ENCODE measurements at regions of chr3 and their contacts with region 1.

Region 1: GRCh38 chr3:149352556-149352955 is 19.1 kb upstream of the TM4SF18 start:
- DNase-seq: peak; percentile 59 to 72 (median 72)
- H3K4me3 ChIP-seq: peak overlapping the region in 1 of 7 experiments; percentile 7
- H3K27ac ChIP-seq: no peak overlapping the region
- H3K4me1 ChIP-seq: peaks cover 0 to 12% (median 1%) of the 10 kb centered on the region in 4 experiments
- H3K27me3 ChIP-seq: no peaks in the 10 kb centered on the region

Region 2: DNA sequence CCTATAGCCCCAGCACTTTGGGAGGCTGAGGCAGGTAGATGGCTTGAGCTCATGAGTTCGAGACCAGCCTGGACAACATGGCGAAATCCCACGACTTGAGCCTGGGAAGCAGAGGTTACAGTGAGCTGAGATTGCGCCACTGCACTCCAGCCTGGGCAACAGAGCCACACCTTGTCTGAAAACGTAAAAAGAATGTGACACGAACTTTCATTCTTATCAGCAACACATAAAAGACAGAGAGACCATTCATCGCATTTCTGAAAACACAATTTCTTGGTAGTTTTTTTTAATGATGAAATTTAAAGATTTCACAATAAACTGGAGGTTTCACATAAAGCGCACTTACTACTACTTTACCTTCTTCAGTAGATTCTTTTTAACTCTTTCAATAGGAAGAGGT is 284.7 kb before region 1 on chr3:
- CTCF ChIA-PET with region 1: no interaction called
- POLR2A ChIA-PET with region 1: no interaction called
- DNase-seq: no peak
- H3K4me3 ChIP-seq: no peak overlapping the region
- H3K27ac ChIP-seq: no peak overlapping the region
- H3K4me1 ChIP-seq: no peaks in the 10 kb centered on the region
- H3K27me3 ChIP-seq: no peaks in the 10 kb centered on the region

Region 3: DNA sequence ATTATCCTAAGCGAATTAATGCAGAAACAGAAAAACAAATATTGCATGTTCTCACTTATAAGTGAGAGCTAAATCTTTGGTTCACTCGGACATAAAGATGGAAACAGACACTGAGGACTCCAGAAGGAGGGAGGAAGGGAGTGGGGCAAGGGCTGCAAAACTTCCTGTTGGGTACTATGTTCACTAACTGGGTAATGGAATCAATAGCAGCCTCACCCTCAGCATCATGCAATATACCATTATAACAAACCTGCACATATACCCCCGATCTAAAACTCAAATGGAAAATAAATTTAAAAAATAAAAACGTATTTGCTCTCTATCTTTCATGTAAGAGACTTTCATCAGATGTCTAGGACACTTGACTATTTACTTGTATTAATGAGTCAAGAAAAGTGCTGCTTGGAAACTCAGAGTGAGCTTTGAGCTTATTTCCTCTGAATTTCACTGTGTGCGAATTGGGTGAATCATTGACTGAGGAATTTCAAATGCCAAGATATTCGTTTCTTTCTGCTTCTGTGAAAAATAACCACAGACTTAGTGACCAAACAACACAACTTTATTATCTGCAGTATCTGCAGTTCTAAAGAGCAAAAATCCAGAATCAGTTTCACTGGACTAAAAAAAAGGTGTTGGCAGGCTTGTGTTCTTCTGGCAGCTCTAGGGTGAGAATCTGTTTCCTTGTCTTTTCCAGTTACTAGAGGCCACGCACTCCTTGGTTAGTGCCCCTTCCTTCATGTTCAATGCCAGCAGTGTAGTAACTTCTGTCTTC is 37.6 kb before region 1 on chr3:
- CTCF ChIA-PET with region 1: no interaction called
- POLR2A ChIA-PET with region 1: no interaction called
- DNase-seq: no peak
- H3K4me3 ChIP-seq: no peak overlapping the region
- H3K27ac ChIP-seq: no peak overlapping the region
- H3K4me1 ChIP-seq: no peaks in the 10 kb centered on the region
- H3K27me3 ChIP-seq: no peaks in the 10 kb centered on the region

Region 4: DNA sequence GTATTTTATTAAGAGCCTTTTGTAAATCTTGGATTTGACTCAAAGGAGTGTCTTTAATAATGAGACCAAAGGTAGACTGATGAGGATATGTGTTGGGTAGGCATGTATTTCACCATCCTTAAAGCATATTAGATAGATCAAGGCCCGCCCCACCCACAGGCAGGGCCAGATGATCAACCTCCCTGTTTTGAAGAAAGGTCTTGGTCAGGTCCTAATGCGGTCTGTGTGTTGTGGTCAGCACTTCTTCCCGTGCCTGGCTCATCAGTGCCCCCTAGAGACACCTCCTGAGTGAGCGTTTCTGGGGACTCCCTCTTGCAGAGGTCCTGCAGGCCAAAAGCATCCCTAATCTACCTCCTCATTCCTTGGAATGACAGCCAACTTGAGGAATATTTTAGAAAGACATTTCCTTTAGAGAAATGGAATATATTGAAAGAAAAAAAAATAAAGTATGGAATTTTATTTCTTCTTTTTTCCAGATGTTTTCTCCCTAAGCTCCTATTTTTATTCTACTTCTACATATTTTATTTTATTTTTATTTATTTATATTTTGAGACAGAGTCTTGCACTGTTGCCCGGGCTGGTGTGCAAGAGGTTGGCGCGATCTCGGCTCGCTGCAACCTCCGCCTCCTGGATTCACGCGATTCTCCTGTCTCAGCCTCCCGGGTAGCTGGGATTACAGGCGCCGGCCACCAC is 127.9 kb after region 1 on chr3:
- CTCF ChIA-PET with region 1: interaction called, 13 read pairs
- POLR2A ChIA-PET with region 1: interaction called, 10 read pairs
- DNase-seq: peak; percentile 67 to 80 (median 77)
- H3K4me3 ChIP-seq: no peak overlapping the region
- H3K27ac ChIP-seq: no peak overlapping the region
- H3K4me1 ChIP-seq: peaks cover 0 to 18% (median 8%) of the 10 kb centered on the region in 4 experiments
- H3K27me3 ChIP-seq: no peaks in the 10 kb centered on the region

Region 5: DNA sequence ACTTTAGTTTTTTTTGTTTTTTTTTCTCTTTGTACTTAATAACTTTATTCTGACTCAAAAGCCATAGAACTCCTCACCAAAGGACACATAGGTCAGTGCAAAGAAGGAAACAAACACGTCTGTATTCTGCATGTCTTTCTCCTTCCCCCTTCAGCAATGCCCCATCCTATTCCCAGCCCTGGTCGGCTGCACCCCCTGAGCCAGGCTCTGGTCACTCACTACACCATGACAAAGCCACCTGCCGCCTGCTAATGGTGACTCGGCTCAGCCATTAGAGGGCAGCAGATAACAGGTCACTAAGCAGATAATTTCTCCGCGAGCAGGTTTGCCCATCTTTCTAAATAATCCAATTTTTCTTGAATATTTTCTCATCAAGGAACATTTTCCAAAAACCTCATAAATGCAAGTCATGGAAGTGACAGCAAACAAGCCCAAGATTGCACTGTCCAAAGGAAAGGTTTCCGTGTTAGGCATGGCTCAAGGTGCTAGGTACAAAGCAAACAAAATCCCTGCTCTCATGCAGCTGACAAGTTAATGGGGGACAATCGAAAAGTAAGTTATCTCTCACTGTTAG is 159.7 kb after region 1 on chr3:
- CTCF ChIA-PET with region 1: no interaction called
- POLR2A ChIA-PET with region 1: no interaction called
- DNase-seq: peak; percentile 55 to 69 (median 68)
- H3K4me3 ChIP-seq: peak overlapping the region in 1 of 7 experiments; percentile 26
- H3K27ac ChIP-seq: no peak overlapping the region
- H3K4me1 ChIP-seq: peaks cover 0 to 29% (median 23%) of the 10 kb centered on the region in 4 experiments
- H3K27me3 ChIP-seq: no peaks in the 10 kb centered on the region

Region 6: DNA sequence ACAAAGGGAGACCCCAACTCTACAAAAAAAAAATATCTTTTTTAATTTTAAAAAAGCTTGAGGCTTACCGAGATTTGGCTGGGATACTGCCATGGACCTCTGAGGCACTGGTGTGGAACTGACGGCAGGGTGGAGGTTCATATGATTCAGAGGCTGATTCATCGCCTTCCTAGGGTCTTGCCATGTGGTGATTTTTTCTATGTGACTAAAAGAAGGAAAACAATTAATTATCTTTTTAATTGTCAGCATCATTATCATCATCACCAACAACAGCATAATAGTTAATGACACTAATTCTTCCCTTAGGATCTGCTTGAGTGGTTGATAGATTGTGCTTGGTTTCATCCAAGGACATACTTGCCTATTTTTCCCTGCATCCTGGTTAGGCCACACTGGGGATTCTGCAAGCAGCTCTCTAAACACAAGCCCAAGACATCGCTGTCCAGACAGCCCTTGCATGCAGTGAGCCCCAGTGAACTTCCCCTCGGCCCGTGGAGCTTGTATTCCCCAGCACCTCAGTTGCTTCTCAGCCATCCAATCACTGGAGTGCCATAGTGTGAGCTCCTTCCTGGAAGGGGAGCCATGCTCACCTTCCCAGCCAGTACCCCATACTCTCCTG is 220.3 kb after region 1 on chr3:
- CTCF ChIA-PET with region 1: no interaction called
- POLR2A ChIA-PET with region 1: no interaction called
- DNase-seq: no peak
- H3K4me3 ChIP-seq: no peak overlapping the region
- H3K27ac ChIP-seq: no peak overlapping the region
- H3K4me1 ChIP-seq: peaks cover 0 to 15% (median 8%) of the 10 kb centered on the region in 4 experiments
- H3K27me3 ChIP-seq: peaks cover 0 to 4% (median 0%) of the 10 kb centered on the region in 5 experiments

Measured in common myeloid progenitor, CD34-positive (primary cell).